Head of caudate nucleus (tissue), 42 donors: ENCODE measurements at regions of chr3 and their contacts with region 1.

Region 1: DNA sequence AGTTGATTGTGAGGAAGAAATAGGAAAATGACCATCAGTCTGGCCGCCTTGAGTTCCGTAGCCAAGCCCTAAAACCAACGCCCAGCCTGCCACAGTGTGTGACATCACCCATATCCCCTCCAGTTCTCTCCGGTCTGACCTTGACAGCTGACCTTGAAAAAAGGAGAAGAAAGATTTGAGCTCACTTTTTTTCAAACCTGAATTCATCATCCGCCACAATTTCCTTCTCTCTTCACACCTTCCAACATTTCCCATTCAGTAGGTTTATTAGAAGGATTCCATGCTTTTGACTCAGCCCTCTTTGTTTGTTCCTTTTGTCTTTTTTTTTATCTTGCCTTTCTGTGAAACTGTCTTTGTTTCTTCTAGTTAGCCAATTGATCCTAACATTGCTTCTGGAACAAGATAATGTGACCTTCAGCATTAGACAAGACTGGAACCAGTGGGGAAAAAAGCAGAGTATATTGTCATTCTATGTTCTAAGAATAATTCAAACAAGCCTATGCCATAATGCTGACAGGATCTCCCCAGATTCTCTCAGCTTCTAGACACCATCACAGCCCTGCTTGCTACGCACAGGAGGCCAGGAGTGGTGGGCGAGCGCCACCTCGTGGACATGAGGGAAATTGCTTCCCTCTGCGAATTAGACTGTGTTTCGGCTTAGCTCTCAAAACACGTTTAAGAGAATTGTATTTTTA is 283.1 kb downstream of the FGF12 start:
- DNase-seq: peak; percentile 53 to 92 (median 83)

Region 2: GRCh38 chr3:191414732-191415131 is 1029.5 kb before region 1 on chr3:
- intact Hi-C with region 1: loop called (anchors 5 kb)
- DNase-seq: no peak

Region 3: DNA sequence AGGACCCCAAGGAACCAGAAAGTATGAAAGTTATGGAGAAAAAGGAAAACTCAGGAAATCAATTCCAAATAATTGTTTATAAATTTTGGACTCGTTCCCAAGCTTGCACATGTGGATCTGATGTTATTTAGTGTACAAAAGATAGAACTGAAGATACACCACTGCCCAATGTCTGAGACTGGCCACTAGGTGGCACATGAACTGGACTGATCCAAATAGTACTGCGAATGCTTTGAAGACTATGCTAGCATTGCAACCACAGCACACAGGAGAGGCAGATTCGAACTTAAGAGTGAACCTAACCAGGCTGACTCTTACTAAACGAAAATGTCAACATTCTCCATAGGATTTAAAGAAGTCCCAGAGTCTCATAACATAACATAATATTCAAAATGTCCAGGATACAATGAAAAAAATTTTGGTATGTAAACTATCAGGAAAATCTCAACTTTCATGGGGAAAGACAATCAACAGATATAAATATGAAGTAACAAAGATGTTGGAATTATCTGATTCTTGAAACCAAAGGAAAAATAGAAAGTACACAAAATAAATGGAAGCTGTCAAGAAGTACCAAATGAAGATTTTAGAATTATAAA is 313.6 kb before region 1 on chr3:
- intact Hi-C with region 1: loop called (anchors 10 kb)
- DNase-seq: peak in 41 of 42 donors; percentile 2 to 84 (median 54)

Region 4: GRCh38 chr3:192621909-192622308 is 177.7 kb after region 1 on chr3:
- intact Hi-C with region 1: no loop called
- DNase-seq: no peak